ENCODE measurements at regions of chrX and their contacts with region 1.

Region 1: DNA sequence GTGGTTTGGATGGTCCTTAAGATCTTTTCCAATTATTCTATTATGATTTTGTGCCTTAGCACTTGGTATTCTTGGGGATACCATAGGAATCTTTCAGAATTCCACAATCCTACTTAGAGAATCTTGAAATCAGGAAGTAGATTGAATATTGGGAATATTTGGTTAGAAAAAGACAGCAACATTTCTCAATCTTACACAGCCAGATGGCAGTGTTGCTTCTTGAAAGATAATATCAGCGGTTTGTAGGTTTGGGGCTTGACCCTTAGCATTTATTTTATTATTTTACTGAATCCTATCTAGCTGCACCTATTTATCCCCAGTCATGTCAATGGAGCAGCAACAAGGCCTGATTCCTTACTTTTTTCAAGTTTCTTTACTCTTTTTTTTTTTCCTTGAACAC is 28.6 kb downstream of the MAGEB1 start:
- DNase-seq: peak; percentile 13
- ATAC-seq: no peak
- H3K4me3 ChIP-seq: no peak overlapping the region
- H3K27ac ChIP-seq: no peak overlapping the region
- H3K4me1 ChIP-seq: no peaks in the 10 kb centered on the region
- H3K27me3 ChIP-seq: no peaks in the 10 kb centered on the region
- CTCF ChIP-seq: peak; percentile 41
- POLR2A ChIP-seq: no peak
- RAD21 ChIP-seq: peak; percentile 55

Region 2: DNA sequence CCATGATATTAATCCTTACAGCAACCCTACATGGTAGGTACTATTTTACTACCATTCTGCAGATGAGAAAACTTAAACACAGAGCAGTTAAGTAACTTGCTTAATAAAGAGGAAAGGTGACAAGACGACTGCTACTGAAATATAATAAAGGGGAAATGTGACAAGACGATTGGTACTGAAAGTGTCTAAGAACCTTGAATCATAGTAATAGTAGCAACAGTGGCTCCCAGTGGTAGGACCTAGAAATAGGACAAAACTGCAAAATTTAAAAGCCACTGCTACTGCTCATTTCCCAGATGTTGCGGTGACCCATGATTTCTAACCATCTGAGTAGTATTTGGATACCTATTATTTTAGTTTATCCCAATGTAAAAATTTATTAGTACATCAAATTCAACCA is 212.6 kb after region 1 on chrX:
- CTCF ChIA-PET with region 1: no interaction called
- POLR2A ChIA-PET with region 1: no interaction called
- dilution Hi-C with region 1: no loop called
- in situ Hi-C with region 1: no loop called
- intact Hi-C with region 1: loop called (anchors 1 kb)
- DNase-seq: peak; percentile 1
- ATAC-seq: no peak
- H3K4me3 ChIP-seq: no peak overlapping the region
- H3K27ac ChIP-seq: no peak overlapping the region
- H3K4me1 ChIP-seq: no peaks in the 10 kb centered on the region
- H3K27me3 ChIP-seq: no peaks in the 10 kb centered on the region
- CTCF ChIP-seq: peak; percentile 24; the same call in 1 of the 2 replicates
- POLR2A ChIP-seq: no peak
- RAD21 ChIP-seq: no peak

Region 3: DNA sequence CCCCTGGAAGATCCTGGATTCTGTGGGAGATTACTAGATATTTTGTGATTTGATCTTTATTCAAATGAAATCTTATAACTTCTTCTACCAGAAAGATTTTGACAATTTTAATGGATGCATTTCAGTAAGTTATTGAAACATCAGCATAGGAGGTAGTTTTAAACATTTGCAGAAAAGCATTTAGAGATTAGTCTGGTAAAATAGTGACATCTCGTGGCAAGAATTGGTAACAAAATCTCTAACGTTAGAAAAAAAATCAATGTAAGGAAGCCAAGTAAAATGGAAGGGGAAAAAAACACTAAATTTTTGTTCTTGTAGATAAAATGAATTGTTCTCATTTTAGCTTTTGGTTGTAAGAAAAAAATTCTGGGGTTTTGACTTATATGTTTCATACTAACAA is 228.8 kb after region 1 on chrX:
- CTCF ChIA-PET with region 1: no interaction called
- POLR2A ChIA-PET with region 1: no interaction called
- dilution Hi-C with region 1: no loop called
- in situ Hi-C with region 1: loop called (anchors 5 kb)
- intact Hi-C with region 1: loop called (anchors 1 kb)
- DNase-seq: peak; percentile 41
- ATAC-seq: no peak
- H3K4me3 ChIP-seq: no peak overlapping the region
- H3K27ac ChIP-seq: no peak overlapping the region
- H3K4me1 ChIP-seq: no peaks in the 10 kb centered on the region
- H3K27me3 ChIP-seq: no peaks in the 10 kb centered on the region; the same call in none of the 2 replicates
- CTCF ChIP-seq: peak; percentile 65
- POLR2A ChIP-seq: no peak
- RAD21 ChIP-seq: peak; percentile 64

Measured in IMR-90 (cell line).